KBM-7 (cell line): ENCODE measurements at regions of chr1 and their contacts with region 1.

Region 1: GRCh38 chr1:20661207-20662109 is at the start of gene DDOST:
- DNase-seq: peak; percentile 98

Region 2: GRCh38 chr1:19918057-19918456 is 743.4 kb before region 1 on chr1:
- in situ Hi-C with region 1: loop called (anchors 25 kb)
- DNase-seq: peak; percentile 78

Region 3: GRCh38 chr1:20732588-20733360 is 71.3 kb after region 1 on chr1 and contains the start of gene SH2D5:
- in situ Hi-C with region 1: no loop called
- DNase-seq: peak; percentile 75

Region 4: DNA sequence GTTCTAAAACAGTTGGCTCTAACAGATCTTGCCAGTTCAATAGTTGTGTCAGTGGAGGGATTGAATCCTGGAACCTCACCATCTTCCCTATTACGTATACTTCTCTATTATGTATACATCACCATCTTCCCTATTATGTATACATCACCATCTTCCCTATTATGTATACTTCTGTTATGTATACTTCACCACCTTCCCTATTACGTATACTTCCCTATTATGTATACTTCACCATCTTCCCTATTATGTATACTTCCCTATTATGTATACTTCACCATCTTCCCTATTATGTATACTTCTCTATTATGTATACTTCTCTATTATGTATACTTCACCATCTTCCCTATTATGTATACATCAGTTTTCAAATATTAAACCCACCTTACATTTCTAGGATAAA is 160.0 kb after region 1 on chr1:
- in situ Hi-C with region 1: no loop called
- DNase-seq: no peak